Activated CD4-positive, alpha-beta memory T cell treated with anti-CD3 and anti-CD28 coated beads for 36 hours (primary cell): ENCODE measurements at regions of chr11 and their contacts with region 1.

Region 1: DNA sequence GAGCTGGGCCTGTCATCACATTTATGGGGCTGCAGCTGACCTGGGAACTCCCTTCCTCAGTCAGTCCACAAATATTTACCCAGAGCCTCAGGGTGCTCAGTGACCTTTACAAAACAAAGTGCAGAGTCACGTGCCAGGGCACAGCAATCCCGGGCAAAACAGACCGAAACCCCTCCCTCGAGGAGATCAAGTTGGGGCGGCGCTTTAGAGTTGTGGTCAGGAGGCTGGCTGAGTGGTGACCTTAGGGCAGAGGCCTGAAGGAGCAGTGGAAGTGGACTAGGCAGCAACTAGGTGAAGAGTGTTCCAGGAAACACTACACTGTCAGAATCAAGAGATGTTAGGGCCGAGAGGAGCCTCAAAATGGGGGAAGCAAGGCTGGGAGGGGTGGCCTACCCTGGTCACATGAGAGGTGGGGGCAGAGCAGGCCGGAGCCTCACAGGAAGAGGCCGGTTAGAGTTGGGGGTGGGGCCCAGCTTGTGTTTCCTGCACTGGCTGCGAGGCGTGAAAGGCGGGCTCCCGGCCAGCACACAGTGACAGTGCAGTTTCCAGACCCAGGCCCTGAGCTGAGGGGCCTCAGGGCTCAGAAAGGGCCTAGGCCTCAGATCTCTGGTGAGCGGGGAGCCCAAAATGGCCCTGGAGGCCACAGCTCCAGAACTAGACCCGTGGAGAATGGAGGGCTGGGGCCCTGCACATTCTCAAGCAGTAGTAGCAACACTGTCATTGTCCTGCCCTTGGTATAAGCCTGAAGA is 3.7 kb upstream of the NEAT1 start:
- DNase-seq: peak; percentile 97
- H3K4me3 Mint-ChIP-seq: peak overlapping the region; percentile 97
- H3K27ac Mint-ChIP-seq: peak overlapping the region; percentile 100
- H3K4me1 Mint-ChIP-seq: peaks cover 47% of the 10 kb centered on the region
- H3K27me3 Mint-ChIP-seq: peaks cover 12% of the 10 kb centered on the region

Region 2: GRCh38 chr11:65366340-65366773 is 52.5 kb before region 1 on chr11:
- CTCF ChIA-PET with region 1: interaction called, 7 read pairs
- POLR2A ChIA-PET with region 1: no interaction called
- intact Hi-C with region 1: loop called (anchors 1 kb)
- DNase-seq: peak; percentile 30
- H3K4me3 Mint-ChIP-seq: no peak overlapping the region
- H3K27ac Mint-ChIP-seq: no peak overlapping the region
- H3K4me1 Mint-ChIP-seq: peaks cover 4% of the 10 kb centered on the region
- H3K27me3 Mint-ChIP-seq: no peaks in the 10 kb centered on the region

Region 3: GRCh38 chr11:65432686-65433582 is 14.0 kb after region 1 on chr11:
- CTCF ChIA-PET with region 1: interaction called, 18 read pairs
- POLR2A ChIA-PET with region 1: interaction called, 175 read pairs
- intact Hi-C with region 1: loop called (anchors 1 kb)
- DNase-seq: peak; percentile 5
- H3K4me3 Mint-ChIP-seq: peak overlapping the region; percentile 21
- H3K27ac Mint-ChIP-seq: peak overlapping the region; percentile 78
- H3K4me1 Mint-ChIP-seq: peaks cover 88% of the 10 kb centered on the region
- H3K27me3 Mint-ChIP-seq: no peaks in the 10 kb centered on the region

Region 4: GRCh38 chr11:65471410-65471762 is 52.5 kb after region 1 on chr11:
- CTCF ChIA-PET with region 1: interaction called, 40 read pairs
- POLR2A ChIA-PET with region 1: interaction called, 258 read pairs
- intact Hi-C with region 1: loop called (anchors 1 kb)
- DNase-seq: no peak
- H3K4me3 Mint-ChIP-seq: peak overlapping the region; percentile 67
- H3K27ac Mint-ChIP-seq: peak overlapping the region; percentile 99
- H3K4me1 Mint-ChIP-seq: peaks cover 29% of the 10 kb centered on the region
- H3K27me3 Mint-ChIP-seq: no peaks in the 10 kb centered on the region

Region 5: GRCh38 chr11:65497141-65498041 is 78.5 kb after region 1 on chr11:
- CTCF ChIA-PET with region 1: interaction called, 52 read pairs
- POLR2A ChIA-PET with region 1: interaction called, 4,089 read pairs
- intact Hi-C with region 1: loop called (anchors 1 kb)
- DNase-seq: peak; percentile 99
- H3K4me3 Mint-ChIP-seq: no peak overlapping the region
- H3K27ac Mint-ChIP-seq: no peak overlapping the region
- H3K4me1 Mint-ChIP-seq: peaks cover 38% of the 10 kb centered on the region
- H3K27me3 Mint-ChIP-seq: peaks cover 10% of the 10 kb centered on the region

Region 6: DNA sequence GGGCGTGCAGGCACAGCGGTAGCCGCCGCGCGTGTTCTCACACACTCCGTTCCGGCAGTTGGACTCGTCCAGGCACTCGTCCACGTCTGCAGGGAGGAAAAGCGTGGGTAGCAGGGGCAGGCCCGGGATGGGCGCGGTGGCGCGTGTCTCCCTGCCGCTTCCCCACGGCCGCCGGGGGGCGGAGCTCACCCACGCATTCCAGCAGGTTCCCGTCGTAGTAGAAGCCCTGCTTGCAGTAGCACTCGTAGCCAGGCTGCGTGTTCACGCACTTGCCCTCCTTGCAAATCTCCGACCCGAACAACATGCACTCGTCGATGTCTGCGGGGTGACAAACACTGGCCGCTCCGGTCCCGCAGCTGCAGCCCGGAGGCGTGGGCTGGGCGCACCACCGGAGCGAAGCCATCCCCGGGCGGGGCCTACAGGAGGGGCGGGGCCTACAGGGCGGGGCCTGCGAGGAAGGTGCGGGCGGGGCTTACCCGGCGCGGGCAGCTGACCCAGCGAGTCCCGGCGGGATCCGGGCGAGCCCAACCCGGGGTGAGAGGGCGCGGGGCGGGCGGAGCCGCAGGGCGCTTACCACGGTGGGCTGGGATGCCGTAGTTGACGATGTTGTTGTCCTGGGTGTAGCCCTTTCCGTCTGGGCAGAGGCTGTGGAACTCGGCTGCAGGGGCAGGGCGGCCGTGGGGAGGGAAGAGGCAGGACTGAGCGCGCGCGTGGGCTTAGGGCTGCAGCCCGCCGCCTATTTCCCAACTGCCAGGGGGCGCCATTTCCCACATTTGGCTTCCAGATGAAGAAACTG is 121.6 kb after region 1 on chr11:
- CTCF ChIA-PET with region 1: interaction called, 5 read pairs
- POLR2A ChIA-PET with region 1: interaction called, 12 read pairs
- intact Hi-C with region 1: no loop called
- DNase-seq: peak; percentile 94
- H3K4me3 Mint-ChIP-seq: peak overlapping the region; percentile 79
- H3K27ac Mint-ChIP-seq: peak overlapping the region; percentile 87
- H3K4me1 Mint-ChIP-seq: peaks cover 20% of the 10 kb centered on the region
- H3K27me3 Mint-ChIP-seq: no peaks in the 10 kb centered on the region

Region 7: GRCh38 chr11:65615229-65615941 is 196.5 kb after region 1 on chr11 and contains the start of gene PCNX3:
- CTCF ChIA-PET with region 1: no interaction called
- POLR2A ChIA-PET with region 1: interaction called, 16 read pairs
- intact Hi-C with region 1: no loop called
- DNase-seq: peak; percentile 100
- H3K4me3 Mint-ChIP-seq: peak within 1 kb of the TSS; percentile 96
- H3K27ac Mint-ChIP-seq: peak within 1 kb of the TSS; percentile 98
- H3K4me1 Mint-ChIP-seq: peaks cover 43% of the 10 kb centered on the region
- H3K27me3 Mint-ChIP-seq: peaks cover 3% of the 10 kb centered on the region
- total RNA-seq, gene PCNX3: 29.8 to 32.1 TPM